MCF 10A (cell line): ENCODE measurements at regions of chr12 and their contacts with region 1.

Region 1: GRCh38 chr12:124906606-124907261 is 7.7 kb downstream of the UBC start:
- DNase-seq: peak; percentile 95
- H3K4me3 Mint-ChIP-seq: peak overlapping the region; percentile 28
- H3K27ac Mint-ChIP-seq: peak overlapping the region; percentile 16
- H3K4me1 Mint-ChIP-seq: peaks cover 45% of the 10 kb centered on the region
- H3K27me3 Mint-ChIP-seq: no peaks in the 10 kb centered on the region
- CTCF ChIP-seq: peak; percentile 97

Region 2: DNA sequence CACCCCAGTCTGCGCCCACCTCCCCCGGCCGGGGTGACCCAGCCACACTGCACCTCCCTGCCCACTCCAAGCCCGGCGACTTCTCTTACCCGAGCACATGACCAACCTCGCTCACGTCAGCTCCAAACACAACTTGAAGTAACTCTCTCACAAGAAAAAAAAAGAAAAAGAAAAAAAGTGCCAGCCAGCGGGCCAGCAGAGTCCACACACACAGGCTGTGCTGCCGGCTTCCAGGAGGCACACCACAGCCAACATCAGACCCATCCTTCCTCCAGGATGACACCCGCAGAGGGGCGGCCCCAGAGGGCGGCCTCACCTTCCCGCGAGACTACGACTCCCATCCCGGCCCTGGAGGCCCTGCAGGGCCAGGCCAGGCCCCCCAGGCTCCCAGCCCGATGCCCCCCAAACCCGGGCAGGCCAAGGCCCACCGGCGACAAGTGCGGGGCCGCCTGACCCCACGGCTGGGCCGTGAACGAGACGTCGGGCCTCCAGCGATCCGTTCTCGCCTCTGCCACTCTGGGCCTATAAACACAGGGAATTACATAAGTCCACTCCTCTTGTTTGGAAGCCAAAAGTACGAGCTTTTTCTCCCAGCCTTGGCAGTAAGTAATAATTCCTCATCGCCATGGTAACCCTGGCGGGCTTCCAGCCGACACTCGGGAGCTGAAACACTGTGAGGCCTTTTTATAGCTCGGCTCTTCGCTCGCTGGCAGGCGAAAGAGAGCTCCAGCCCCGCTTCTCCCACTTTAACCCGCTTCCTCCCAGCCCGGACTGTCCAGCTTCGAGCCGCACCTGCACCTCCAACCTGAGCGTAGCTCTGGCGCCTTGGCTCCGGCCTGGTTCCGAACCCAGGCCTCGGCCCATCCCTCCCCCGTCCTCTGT is 388.4 kb before region 1 on chr12:
- CTCF ChIA-PET with region 1: no interaction called
- POLR2A ChIA-PET with region 1: interaction called, 6 read pairs
- intact Hi-C with region 1: loop called (anchors 10 kb)
- DNase-seq: peak; percentile 99
- H3K4me3 Mint-ChIP-seq: peak overlapping the region; percentile 91
- H3K27ac Mint-ChIP-seq: peak overlapping the region; percentile 96
- H3K4me1 Mint-ChIP-seq: peaks cover 39% of the 10 kb centered on the region
- H3K27me3 Mint-ChIP-seq: no peaks in the 10 kb centered on the region
- CTCF ChIP-seq: no peak

Region 3: DNA sequence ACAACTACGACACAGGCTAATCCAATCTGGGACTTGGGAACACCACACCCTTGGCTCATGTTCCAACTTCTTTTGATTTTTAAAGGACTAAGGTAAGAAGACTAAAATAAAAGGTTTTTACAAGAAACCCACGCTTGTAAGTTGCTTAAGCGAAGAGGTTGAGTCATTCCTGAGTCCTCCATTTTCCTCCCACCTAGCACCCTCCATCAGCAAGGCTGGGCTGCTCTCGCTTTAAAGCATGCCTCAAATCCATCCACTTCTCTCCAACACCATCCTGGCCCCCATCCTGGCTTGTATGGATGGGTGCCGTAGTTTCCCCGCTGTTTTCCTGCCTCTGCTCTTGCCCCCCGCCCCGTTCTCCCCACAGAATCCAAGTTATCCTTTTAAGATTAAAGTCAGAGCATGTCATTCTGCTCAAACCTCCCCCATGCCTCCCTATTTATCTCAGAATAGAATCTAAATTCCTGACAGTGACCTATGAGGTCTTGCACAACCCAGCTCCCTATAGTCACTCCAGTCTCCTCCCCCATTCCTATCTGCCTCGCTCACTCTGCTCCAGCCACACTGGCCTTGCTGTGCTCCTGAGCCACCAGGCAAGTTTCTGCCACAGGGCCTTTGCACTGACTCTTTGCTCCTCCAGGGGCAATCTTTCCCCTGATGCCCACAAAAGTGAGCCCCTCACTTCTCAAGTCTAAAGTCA is 77.6 kb before region 1 on chr12:
- CTCF ChIA-PET with region 1: interaction called, 24 read pairs
- POLR2A ChIA-PET with region 1: interaction called, 20 read pairs
- intact Hi-C with region 1: loop called (anchors 2 kb)
- DNase-seq: peak; percentile 91
- H3K4me3 Mint-ChIP-seq: peak overlapping the region; percentile 58
- H3K27ac Mint-ChIP-seq: peak overlapping the region; percentile 96
- H3K4me1 Mint-ChIP-seq: peaks cover 43% of the 10 kb centered on the region
- H3K27me3 Mint-ChIP-seq: no peaks in the 10 kb centered on the region
- CTCF ChIP-seq: no peak

Region 4: GRCh38 chr12:124863416-124864325 is 43.1 kb before region 1 on chr12 and contains the start of gene SCARB1:
- CTCF ChIA-PET with region 1: interaction called, 14 read pairs
- POLR2A ChIA-PET with region 1: interaction called, 11 read pairs
- intact Hi-C with region 1: no loop called
- DNase-seq: peak; percentile 83
- H3K4me3 Mint-ChIP-seq: peak within 1 kb of the TSS; percentile 76
- H3K27ac Mint-ChIP-seq: peak within 1 kb of the TSS; percentile 86
- H3K4me1 Mint-ChIP-seq: peaks cover 32% of the 10 kb centered on the region
- H3K27me3 Mint-ChIP-seq: no peaks in the 10 kb centered on the region
- CTCF ChIP-seq: no peak
- total RNA-seq, gene SCARB1: 48.2 and 71.0 TPM in 2 replicates

Region 5: GRCh38 chr12:124927201-124928094 is 20.7 kb after region 1 on chr12:
- CTCF ChIA-PET with region 1: interaction called, 15 read pairs
- POLR2A ChIA-PET with region 1: interaction called, 2,121 read pairs
- intact Hi-C with region 1: no loop called
- DNase-seq: peak; percentile 94
- H3K4me3 Mint-ChIP-seq: peak overlapping the region; percentile 73
- H3K27ac Mint-ChIP-seq: peak overlapping the region; percentile 99
- H3K4me1 Mint-ChIP-seq: peaks cover 42% of the 10 kb centered on the region
- H3K27me3 Mint-ChIP-seq: no peaks in the 10 kb centered on the region
- CTCF ChIP-seq: no peak

Region 6: DNA sequence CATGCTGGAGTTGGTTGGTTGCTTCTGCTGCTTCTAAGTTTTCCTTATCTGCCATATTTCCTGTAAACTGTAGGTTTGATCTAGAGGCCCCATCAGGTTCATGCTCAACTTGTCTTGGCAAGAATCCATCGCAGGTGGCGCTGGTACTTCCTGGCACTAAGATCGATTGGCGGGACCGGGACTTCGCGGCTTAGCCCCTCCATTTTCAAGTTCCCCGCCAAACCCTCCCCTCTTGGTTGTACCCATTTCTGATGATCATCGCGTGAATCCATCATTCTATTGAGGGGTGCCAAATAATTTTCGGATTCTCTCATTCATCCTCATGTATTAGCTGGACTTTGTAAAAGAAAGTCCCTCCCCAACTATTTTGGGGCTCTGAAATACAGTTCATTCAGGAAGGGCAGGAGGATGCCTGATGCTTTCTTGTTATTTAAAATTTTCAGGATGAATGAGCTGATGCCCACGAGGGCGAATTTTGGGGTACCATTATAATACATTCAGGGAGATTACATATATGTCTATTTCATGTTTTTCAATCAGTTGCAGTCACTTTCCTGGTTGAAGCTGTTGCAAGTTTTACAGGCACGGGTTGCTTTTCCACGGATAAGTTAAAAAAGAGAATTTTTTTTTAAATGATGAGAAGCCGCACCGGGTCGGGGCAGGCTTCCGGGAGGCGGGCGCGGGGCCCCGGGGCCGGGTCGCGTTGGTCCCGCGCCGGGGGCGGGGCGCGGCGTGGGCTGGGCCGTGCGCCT is 86.3 kb after region 1 on chr12:
- CTCF ChIA-PET with region 1: interaction called, 13 read pairs
- POLR2A ChIA-PET with region 1: interaction called, 5 read pairs
- intact Hi-C with region 1: no loop called
- DNase-seq: peak; percentile 80
- H3K4me3 Mint-ChIP-seq: peak overlapping the region; percentile 93
- H3K27ac Mint-ChIP-seq: peak overlapping the region; percentile 25
- H3K4me1 Mint-ChIP-seq: peaks cover 15% of the 10 kb centered on the region
- H3K27me3 Mint-ChIP-seq: no peaks in the 10 kb centered on the region
- CTCF ChIP-seq: peak; percentile 54